ENCODE measurements at regions of chr5 and their contacts with region 1.

Region 1: DNA sequence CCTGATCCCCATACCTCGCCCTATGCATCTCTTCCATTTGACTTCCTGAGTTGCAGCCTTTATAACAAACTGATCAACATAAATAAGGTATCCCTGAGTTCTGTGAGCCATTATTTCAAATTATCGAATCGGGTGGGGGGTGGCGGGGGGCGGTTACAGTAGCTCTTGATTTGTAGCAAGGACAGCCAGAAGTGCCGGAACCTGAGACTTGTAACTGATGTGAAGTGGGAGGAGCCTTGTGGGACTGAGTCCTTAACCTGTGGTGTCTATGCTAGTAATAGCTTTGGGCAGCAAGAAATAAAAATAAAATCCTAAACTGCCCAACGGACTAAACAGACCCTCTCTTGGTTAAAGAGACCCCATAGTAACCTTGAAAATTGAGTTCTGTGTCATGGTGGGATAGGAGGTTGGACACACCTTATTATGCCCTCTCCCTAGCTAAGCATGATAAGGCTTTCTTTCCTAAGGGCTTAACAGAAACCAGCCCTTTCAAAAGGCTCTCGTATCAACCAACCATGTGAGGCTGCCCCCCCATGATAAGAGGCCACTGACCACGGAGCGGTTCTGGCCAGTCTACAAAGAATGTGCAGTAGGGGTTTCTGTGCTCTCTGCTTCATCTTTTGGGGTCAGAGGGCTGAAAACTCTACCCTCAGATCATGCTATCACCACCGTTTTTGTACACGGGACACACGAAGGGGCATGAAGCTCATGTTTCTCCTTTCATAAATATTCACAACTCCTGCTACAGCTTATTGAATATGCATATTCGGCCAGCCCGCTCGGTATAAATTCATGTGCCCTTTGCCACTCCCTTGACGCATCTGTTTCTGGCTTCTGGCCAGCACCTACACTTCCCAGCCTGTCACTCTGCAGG is 39.5 kb upstream of the IQGAP2 start:
- DNase-seq: peak; percentile 73 to 93 (median 80)
- ATAC-seq: peak; percentile 96
- H3K4me3 ChIP-seq: peak overlapping the region; percentile 22
- H3K27ac ChIP-seq: peak overlapping the region; percentile 98
- H3K4me1 ChIP-seq: peaks cover 6 to 31% of the 10 kb centered on the region in 2 experiments; a peak in 4 of 5 replicates
- H3K27me3 ChIP-seq: no peaks in the 10 kb centered on the region
- CTCF ChIP-seq: no peak
- EP300 ChIP-seq: peak; percentile 85; the same call in 1 of the 2 replicates
- POLR2A ChIP-seq: peak; percentile 45; the same call in 1 of the 2 replicates
- RAD21 ChIP-seq: 0 out of 4 replicates have a peak, but pooled peaks of 1 of the 2 experiments have one; percentile 7

Region 2: GRCh38 chr5:75993183-75993582 is 370.4 kb before region 1 on chr5:
- CTCF ChIA-PET with region 1: no interaction called
- POLR2A ChIA-PET with region 1: no interaction called
- in situ Hi-C with region 1: no loop called
- intact Hi-C with region 1: no loop called
- DNase-seq: no peak
- ATAC-seq: no peak
- H3K4me3 ChIP-seq: no peak overlapping the region
- H3K27ac ChIP-seq: no peak overlapping the region
- H3K4me1 ChIP-seq: no peaks in the 10 kb centered on the region
- H3K27me3 ChIP-seq: no peaks in the 10 kb centered on the region
- CTCF ChIP-seq: no peak
- EP300 ChIP-seq: no peak
- POLR2A ChIP-seq: no peak
- RAD21 ChIP-seq: no peak

Region 3: DNA sequence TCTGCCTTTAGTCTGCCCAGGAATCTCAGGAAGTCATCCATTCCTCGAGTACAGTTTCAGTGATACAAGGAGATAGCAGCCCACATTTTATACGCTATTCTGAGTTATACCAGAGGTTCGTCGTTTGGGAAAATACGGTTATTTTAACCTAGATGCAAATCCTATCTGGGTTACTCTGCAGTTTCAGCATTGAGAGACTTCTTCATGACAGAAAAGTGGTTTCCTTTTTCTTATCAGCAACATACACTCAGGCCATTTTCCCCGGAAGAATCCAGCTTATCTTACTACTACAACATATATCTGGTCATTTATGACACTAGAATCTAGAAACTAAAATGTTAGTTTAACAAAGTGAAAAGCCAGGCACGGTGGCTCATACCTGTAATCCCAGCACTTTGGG is 43.9 kb before region 1 on chr5:
- CTCF ChIA-PET with region 1: no interaction called
- POLR2A ChIA-PET with region 1: no interaction called
- in situ Hi-C with region 1: no loop called
- intact Hi-C with region 1: loop called (anchors 5 kb)
- DNase-seq: peak; percentile 59 to 84 (median 72)
- ATAC-seq: peak; percentile 93
- H3K4me3 ChIP-seq: no peak overlapping the region
- H3K27ac ChIP-seq: peak overlapping the region; percentile 69
- H3K4me1 ChIP-seq: peaks cover 11 to 21% of the 10 kb centered on the region in 2 experiments; a peak in 4 of 5 replicates
- H3K27me3 ChIP-seq: no peaks in the 10 kb centered on the region
- CTCF ChIP-seq: no peak
- EP300 ChIP-seq: peak; percentile 96
- POLR2A ChIP-seq: no peak
- RAD21 ChIP-seq: 0 out of 4 replicates have a peak, but pooled peaks of 1 of the 2 experiments have one; percentile 9

Region 4: DNA sequence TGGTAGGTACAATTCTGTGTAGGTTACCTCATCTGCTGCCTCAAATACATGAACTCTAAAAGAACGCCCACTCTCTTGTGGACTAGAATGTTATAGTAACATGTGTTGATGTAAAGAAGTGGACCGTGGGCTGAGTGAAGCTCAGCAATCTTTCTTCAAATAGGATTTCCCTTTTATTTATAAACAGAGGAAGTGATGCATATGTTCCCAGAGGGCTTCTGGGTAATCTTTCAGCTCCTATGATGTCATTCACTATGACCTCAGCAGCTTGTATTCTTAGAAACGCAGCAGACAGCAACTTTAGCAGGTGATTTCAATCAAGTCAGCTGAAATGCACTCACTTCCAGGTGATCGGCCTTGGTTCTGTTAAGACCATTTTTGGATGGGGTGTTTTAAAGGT is 245.2 kb after region 1 on chr5:
- CTCF ChIA-PET with region 1: no interaction called
- POLR2A ChIA-PET with region 1: no interaction called
- in situ Hi-C with region 1: no loop called
- intact Hi-C with region 1: no loop called
- DNase-seq: peak in 2 of 4 experiments; percentile 16 to 58
- ATAC-seq: peak; percentile 77
- H3K4me3 ChIP-seq: no peak overlapping the region
- H3K27ac ChIP-seq: no peak overlapping the region; the same call in 2 of the 3 replicates
- H3K4me1 ChIP-seq: peaks cover 0 to 2% of the 10 kb centered on the region in 2 experiments; a peak in 1 of 5 replicates
- H3K27me3 ChIP-seq: no peaks in the 10 kb centered on the region
- CTCF ChIP-seq: no peak
- EP300 ChIP-seq: 0 out of 2 replicates have a peak, but pooled peaks have one; percentile 7
- POLR2A ChIP-seq: no peak
- RAD21 ChIP-seq: no peak

Region 5: DNA sequence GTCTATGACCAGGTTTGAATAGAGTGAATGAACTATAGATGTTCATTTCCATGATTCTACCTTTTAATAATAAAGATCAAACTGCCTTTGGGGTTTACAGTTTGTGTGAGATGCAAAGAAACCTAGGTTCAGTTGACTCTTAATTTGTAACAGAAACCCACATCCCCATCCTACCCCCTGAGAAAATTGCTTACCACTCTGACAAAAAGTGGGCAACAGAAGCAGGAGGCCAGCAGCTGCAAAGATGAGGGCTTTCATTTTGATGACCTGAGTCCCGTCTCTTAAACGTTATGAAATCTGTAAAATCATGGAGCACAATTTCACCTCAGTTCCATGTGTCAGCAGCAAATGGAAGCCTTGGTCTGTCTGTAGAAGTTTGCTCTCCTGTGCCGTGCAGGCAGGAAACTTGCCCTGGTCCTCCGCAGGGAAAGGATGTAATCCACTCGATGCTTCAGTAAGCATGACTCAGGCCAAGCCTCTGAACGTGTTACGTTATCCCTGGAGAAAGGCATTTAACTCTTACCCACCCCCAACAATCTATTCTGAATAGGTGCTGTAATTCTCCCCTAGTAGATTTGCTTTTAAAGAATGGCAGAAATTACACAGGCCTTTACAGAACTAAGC is 259.5 kb after region 1 on chr5 and contains the start of gene F2RL2:
- CTCF ChIA-PET with region 1: no interaction called
- POLR2A ChIA-PET with region 1: no interaction called
- in situ Hi-C with region 1: no loop called
- intact Hi-C with region 1: no loop called
- DNase-seq: peak; percentile 12 to 56 (median 28)
- ATAC-seq: peak; percentile 80
- H3K4me3 ChIP-seq: no peak within 1 kb of the TSS
- H3K27ac ChIP-seq: no peak within 1 kb of the TSS
- H3K4me1 ChIP-seq: peaks cover 0 to 17% of the 10 kb centered on the region in 2 experiments; a peak in 3 of 5 replicates
- H3K27me3 ChIP-seq: no peaks in the 10 kb centered on the region
- CTCF ChIP-seq: no peak
- EP300 ChIP-seq: no peak
- POLR2A ChIP-seq: no peak
- RAD21 ChIP-seq: no peak
- polyA plus RNA-seq, gene F2RL2: 0.03 to 0.06 TPM

Measured in K562 (cell line).